ENCODE measurements at regions of chr19 and their contacts with region 1.

Region 1: DNA sequence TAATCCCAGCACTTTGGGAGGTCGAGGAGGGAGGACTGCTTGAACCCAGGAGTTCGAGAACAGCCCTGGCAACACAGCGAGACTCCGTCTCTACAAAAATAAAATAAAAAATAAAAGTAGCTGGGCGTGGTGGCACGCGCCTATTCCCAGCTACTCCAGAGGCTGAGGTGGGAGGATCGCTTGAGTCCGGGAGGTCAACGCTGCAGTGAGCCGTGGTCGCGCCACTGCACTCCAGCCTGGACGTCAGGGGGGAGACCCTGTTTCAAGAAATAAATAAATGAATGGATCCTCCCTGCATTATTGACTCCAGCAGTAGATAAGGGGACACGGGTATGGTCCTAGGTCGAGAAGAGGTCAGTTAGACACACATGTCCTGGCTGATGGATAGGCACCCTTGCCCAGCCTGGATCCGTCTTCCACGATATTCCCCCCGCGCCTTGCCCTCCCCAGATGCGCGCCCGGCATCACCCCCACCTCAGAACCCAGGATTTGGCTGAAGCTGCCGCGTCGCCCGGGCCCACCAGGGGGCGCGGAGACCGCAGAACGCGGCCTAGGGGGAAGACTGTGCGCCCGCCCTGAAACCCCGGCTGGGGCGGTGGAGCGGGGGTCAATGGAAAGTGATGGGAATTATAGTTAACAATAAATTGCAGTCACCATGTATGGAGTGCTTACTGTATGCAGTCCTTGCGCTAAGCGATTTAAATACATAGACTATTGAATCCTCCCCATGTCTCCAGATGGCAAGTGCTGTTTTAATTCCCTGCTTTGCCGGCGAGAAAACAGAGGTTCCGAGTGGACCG is 2.1 kb upstream of the HOOK2 start:
- DNase-seq: peak; percentile 85
- ATAC-seq: peak; percentile 37
- H3K4me3 Mint-ChIP-seq: peak overlapping the region; percentile 83
- H3K27ac Mint-ChIP-seq: peak overlapping the region; percentile 87
- H3K4me1 Mint-ChIP-seq: peaks cover 48% of the 10 kb centered on the region
- H3K27me3 Mint-ChIP-seq: no peaks in the 10 kb centered on the region
- CTCF ChIP-seq: peak; percentile 73

Region 2: DNA sequence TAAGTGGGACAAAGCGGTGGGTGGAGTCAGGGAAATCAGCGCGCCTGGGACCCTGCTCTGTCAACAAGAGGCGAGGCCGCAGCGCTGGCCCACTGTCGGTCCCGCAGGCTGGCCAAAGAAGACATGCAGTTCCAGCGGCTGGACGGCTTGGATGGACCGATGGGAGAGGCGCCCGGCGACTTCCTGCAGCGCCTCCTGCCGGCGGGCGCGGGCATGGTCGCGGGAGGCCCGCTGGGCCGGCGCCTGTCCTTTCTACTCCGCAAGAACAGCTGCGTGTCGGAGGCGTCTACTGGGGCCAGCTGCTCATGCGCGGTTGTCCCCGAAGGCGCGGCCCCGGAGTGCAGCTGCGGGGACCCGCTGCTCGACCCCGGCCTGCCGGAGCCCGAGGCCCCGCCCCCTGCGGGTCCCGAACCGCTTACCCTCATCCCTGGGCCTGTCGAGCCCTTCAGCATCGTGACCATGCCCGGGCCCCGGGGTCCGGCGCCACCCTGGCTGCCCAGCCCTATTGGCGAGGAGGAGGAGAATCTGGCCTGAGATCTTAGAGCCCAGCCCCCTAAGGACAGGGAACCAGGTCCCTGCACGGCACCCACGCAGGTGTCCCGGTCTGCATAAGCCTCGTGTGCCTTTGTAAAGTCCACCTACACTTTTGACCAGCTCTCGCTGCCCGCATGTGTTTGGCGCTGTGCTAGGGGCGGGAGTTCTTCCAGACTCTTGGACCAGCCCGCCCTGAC is 19.7 kb before region 1 on chr19:
- CTCF ChIA-PET with region 1: interaction called, 13 read pairs
- POLR2A ChIA-PET with region 1: interaction called, 5 read pairs
- intact Hi-C with region 1: no loop called
- DNase-seq: peak; percentile 69
- ATAC-seq: peak; percentile 75
- H3K4me3 Mint-ChIP-seq: no peak overlapping the region
- H3K27ac Mint-ChIP-seq: no peak overlapping the region
- H3K4me1 Mint-ChIP-seq: peaks cover 10% of the 10 kb centered on the region
- H3K27me3 Mint-ChIP-seq: peaks cover 22% of the 10 kb centered on the region
- CTCF ChIP-seq: peak; percentile 70

Region 3: DNA sequence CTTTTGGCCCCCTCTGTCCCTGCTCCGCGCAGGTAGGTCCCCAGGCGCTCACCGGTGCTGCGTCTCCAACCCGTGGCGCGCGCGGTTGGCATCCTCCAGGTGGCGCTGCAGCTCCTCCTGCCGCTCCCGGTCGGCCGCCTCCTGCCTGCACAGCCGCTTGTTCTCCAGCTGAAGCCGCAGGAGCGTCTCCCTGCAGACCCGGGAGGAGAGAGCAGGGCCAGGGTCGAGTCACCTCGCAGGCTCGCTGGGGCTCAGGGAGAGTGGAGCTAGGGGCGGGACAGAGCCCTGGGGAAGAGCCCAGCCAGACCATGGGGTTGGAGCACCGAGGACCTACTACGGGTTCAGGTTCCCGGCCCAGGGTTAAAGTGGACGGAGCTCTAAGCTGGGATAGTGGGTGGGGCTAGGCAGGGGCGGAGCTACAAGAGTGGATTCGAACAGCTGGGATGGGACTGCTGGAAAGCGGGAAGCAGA is 11.3 kb before region 1 on chr19:
- CTCF ChIA-PET with region 1: interaction called, 18 read pairs
- POLR2A ChIA-PET with region 1: interaction called, 5 read pairs
- intact Hi-C with region 1: loop called (anchors 1 kb)
- DNase-seq: peak; percentile 84
- ATAC-seq: peak; percentile 68
- H3K4me3 Mint-ChIP-seq: peak overlapping the region; percentile 32
- H3K27ac Mint-ChIP-seq: no peak overlapping the region
- H3K4me1 Mint-ChIP-seq: peaks cover 12% of the 10 kb centered on the region
- H3K27me3 Mint-ChIP-seq: no peaks in the 10 kb centered on the region
- CTCF ChIP-seq: peak; percentile 34

Region 4: DNA sequence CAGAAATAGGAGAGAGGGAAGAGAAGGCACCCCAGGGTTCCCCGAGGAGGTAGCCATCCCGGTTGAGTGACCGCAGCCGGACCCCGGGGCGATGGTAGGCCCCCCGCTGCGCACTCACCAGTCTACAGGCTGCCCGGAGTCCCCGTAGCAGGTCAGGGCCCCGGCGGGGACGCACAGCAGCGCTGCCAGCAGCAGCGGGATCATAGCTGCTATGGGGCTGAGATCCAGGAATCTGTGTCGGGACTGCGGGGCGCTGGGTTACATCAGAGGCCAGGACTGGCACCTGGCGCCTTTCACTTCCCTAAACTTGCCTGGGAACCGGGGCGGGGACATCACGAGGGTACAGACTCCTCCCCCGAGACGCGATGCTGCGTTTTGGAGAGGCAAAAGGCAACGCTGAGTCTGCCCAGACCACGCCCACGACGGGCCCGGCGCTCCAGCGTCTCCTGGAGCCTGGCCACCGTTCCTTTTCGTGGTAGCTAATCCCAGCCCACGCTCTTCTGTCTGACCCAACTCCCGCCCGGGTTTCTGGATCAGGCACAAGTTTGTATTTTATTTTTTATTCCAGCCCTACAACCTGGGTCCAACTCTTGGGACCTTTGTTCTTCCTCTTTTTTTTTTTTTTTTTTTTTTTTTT is 103.9 kb after region 1 on chr19 and contains the start of gene DNASE2:
- CTCF ChIA-PET with region 1: no interaction called
- POLR2A ChIA-PET with region 1: no interaction called
- intact Hi-C with region 1: no loop called
- DNase-seq: peak; percentile 85
- ATAC-seq: peak; percentile 84
- H3K4me3 Mint-ChIP-seq: peak within 1 kb of the TSS; percentile 92
- H3K27ac Mint-ChIP-seq: peak within 1 kb of the TSS; percentile 94
- H3K4me1 Mint-ChIP-seq: peaks cover 34% of the 10 kb centered on the region
- H3K27me3 Mint-ChIP-seq: no peaks in the 10 kb centered on the region
- CTCF ChIP-seq: no peak
- total RNA-seq, gene DNASE2: 26.5 and 27.2 TPM in 2 replicates

Region 5: DNA sequence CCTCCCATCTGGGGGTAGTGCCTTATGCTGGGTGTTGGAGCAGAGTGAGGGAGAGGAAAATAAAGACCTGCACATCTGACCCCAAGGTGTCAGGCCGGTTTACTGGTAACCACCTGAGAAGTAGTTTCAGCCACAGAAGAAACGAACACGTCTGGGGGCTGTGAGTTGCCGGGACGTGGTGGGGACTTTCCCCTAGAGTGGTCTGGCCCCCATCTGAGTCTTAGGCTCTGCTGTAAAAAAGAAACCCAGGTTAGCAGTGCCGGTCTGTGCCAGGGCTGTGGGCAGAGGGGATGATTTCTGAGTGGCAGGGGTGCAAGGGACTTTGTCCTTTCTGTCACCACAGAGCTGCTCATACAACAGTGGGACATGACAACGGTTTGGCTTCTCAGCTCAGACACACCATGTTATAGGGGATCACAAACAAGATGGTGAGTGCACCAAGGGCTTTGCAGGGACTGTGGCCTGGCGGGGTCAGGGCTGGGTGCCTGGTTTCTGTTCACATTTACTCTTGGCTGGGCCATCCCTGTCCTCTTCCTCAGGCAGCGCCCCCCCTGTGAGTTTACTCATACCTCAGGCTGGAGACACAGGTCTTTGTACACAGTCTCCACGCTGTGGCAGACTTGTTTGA is 122.6 kb after region 1 on chr19:
- CTCF ChIA-PET with region 1: no interaction called
- POLR2A ChIA-PET with region 1: no interaction called
- intact Hi-C with region 1: no loop called
- DNase-seq: no peak
- ATAC-seq: peak; percentile 91
- H3K4me3 Mint-ChIP-seq: peak overlapping the region; percentile 59
- H3K27ac Mint-ChIP-seq: peak overlapping the region; percentile 79
- H3K4me1 Mint-ChIP-seq: peaks cover 11% of the 10 kb centered on the region
- H3K27me3 Mint-ChIP-seq: no peaks in the 10 kb centered on the region
- CTCF ChIP-seq: no peak

Measured in activated B cell treated with CpG ODN at 0.5 μM for 24 hours (primary cell).